Ascending aorta (tissue), 2 donors: ENCODE measurements at regions of chr19 and their contacts with region 1.

Region 1: GRCh38 chr19:9538183-9539058 is at the start of gene ZNF426:
- DNase-seq: peak; percentile 37 to 89
- H3K4me3 ChIP-seq: peak within 1 kb of the TSS; percentile 79 to 80
- H3K27ac ChIP-seq: peak within 1 kb of the TSS; percentile 89 to 90
- H3K4me1 ChIP-seq: peaks cover 0 to 8% of the 10 kb centered on the region in 2 donors
- H3K27me3 ChIP-seq: no peaks in the 10 kb centered on the region
- CTCF ChIP-seq: no peak
- total RNA-seq, gene ZNF426: 24.6 TPM

Region 2: DNA sequence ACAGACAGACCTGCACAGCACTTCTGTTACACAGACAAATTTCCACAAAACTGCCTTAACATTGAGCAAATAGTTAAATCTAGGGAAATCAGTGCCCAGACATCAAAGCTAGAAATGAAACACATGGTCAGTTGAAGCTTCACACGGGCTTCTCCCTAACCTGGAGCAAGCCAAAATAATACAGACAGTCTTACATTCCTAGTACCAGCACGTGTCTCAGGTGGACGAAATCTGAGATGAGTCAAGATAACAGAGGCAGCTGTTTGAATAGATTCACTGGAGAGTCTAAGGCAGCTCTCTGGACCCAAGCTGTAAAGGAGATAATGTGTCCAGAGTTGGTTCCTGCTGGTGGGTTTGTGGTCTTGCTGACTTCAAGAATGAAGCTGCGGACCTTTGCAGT is 224.7 kb before region 1 on chr19:
- intact Hi-C with region 1: no loop called
- DNase-seq: no peak
- H3K4me3 ChIP-seq: no peak overlapping the region
- H3K27ac ChIP-seq: no peak overlapping the region
- H3K4me1 ChIP-seq: no peaks in the 10 kb centered on the region
- H3K27me3 ChIP-seq: no peaks in the 10 kb centered on the region
- CTCF ChIP-seq: no peak

Region 3: DNA sequence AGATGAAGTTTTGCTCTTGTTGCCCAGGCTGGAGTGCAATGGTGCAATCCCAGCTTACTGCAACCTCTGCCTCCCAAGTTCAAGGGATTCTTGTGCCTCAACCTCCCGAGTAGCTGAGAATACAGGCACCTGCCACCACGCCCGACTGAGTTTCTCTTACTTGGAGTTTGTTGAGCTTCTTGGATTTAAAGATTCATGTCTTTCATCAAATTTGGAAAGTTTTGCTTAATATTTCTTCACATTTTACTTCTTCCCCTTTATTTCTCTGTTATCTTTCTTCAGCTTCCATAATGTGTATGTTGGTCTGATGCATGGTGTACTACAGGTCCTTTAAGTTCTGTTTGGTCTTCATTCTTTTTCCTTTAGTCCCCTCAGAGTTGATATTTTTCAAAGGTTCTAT is 31.1 kb before region 1 on chr19:
- intact Hi-C with region 1: no loop called
- DNase-seq: no peak
- H3K4me3 ChIP-seq: no peak overlapping the region
- H3K27ac ChIP-seq: no peak overlapping the region
- H3K4me1 ChIP-seq: no peaks in the 10 kb centered on the region
- H3K27me3 ChIP-seq: no peaks in the 10 kb centered on the region
- CTCF ChIP-seq: no peak

Region 4: GRCh38 chr19:9523885-9524474 is 14.4 kb before region 1 on chr19:
- intact Hi-C with region 1: no loop called
- DNase-seq: no peak
- H3K4me3 ChIP-seq: no peak overlapping the region
- H3K27ac ChIP-seq: no peak overlapping the region
- H3K4me1 ChIP-seq: no peaks in the 10 kb centered on the region
- H3K27me3 ChIP-seq: no peaks in the 10 kb centered on the region
- CTCF ChIP-seq: no peak

Region 5: GRCh38 chr19:9570255-9570654 is 31.8 kb after region 1 on chr19:
- intact Hi-C with region 1: no loop called
- DNase-seq: no peak
- H3K4me3 ChIP-seq: no peak overlapping the region
- H3K27ac ChIP-seq: no peak overlapping the region
- H3K4me1 ChIP-seq: no peaks in the 10 kb centered on the region
- H3K27me3 ChIP-seq: no peaks in the 10 kb centered on the region
- CTCF ChIP-seq: no peak

Region 6: GRCh38 chr19:9610484-9611113 is 72.2 kb after region 1 on chr19:
- intact Hi-C with region 1: loop called (anchors 2 kb)
- DNase-seq: no peak
- H3K4me3 ChIP-seq: no peak overlapping the region
- H3K27ac ChIP-seq: no peak overlapping the region
- H3K4me1 ChIP-seq: no peaks in the 10 kb centered on the region
- H3K27me3 ChIP-seq: no peaks in the 10 kb centered on the region
- CTCF ChIP-seq: no peak

Region 7: DNA sequence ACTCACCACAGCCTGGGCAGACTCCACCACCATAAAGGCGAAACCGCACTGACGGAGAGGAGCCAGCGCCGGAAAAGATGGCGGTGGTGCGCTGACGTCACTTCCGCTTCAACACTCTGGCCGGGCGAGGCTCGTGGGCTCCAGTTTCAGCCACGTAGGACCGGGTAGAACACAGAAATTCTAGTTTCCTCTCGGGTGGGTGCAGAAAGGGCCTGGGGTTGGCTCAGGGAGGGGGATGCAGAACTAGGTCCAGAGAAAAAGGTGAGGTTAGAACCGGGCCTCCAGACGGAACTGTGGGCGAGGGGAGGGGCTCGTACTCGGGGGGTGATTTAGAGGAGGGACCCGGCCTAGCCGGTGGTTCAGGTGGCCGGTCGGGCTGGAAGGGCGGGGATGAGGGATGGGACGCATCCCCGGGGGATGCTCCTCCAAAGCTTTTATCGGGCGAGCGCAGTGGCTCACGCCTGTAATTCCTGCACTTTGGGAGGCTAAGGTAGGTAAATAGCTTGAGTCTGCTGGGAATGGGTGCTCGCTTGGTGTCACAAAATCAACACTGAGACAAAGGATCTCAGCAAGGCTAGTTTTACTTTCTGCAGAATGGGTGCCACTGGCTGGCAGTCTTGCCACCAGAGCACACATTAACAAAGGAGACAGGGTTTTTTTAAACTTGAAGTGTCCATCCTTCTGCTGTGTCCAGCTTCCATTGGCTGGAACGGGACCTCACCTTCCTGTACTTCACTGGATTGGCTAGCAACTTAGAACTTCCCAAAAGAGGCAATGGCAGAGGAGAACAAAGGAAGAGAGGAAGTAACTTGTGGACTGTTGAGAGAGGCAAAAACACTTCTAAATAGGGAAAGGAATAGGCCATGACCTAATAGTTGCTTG is 83.0 kb after region 1 on chr19 and contains the start of gene ZNF561:
- intact Hi-C with region 1: loop called (anchors 5 kb)
- DNase-seq: peak; percentile 14 to 90
- H3K4me3 ChIP-seq: peak within 1 kb of the TSS; percentile 83 to 87
- H3K27ac ChIP-seq: peak within 1 kb of the TSS; percentile 89 to 91
- H3K4me1 ChIP-seq: peaks cover 0 to 17% of the 10 kb centered on the region in 2 donors
- H3K27me3 ChIP-seq: no peaks in the 10 kb centered on the region
- CTCF ChIP-seq: no peak
- total RNA-seq, gene ZNF561: 35.4 TPM